Ascending aorta (tissue), 2 donors: ENCODE measurements at regions of chr6 and their contacts with region 1.

Region 1: DNA sequence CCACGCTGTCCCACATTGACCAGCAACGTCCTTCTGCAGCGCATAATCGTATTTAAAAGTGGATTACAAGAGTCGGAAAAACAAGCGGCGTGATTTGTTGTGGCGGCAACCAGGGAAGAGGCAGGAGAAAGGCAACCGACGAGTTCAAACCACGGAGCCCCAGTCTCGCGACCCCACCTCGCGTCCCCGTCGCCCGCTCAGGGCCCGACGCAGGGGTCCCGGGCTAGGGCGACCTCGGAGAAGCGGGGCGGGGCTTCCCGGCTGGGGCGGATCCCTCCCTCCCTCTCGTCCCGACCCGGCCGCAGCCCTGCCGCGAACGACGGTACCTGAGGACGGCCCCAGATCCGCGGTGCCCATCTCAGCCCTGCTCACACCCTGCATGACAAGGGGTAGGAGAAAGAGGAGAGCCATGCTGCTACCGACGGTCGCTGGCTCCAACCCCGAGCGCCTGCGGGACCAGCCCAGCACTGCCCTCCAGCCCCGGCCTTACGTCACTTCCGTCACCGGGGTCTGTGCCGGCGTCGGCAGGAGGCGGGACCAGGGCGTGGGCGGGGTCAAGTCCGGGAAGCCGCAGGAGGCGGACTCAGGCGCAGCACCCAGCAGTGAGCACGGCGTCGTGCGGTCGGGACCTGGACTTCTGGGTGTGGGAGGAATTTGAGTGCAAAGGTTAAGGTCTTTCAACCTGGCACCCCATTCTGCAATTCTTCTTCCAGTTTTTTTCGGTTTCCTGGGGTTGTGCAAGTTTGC is at the start of gene IFNGR1:
- DNase-seq: peak; percentile 82 to 98
- H3K4me3 ChIP-seq: peak within 1 kb of the TSS; percentile 87 to 93
- H3K27ac ChIP-seq: peak within 1 kb of the TSS; percentile 99
- H3K4me1 ChIP-seq: peaks cover 6 to 46% of the 10 kb centered on the region in 2 donors
- H3K27me3 ChIP-seq: no peaks in the 10 kb centered on the region
- CTCF ChIP-seq: peak in 1 of 3 experiments; percentile 2
- total RNA-seq, gene IFNGR1: 47.7 TPM

Region 2: GRCh38 chr6:136822376-136823127 is 396.5 kb before region 1 on chr6 and contains the start of gene PEX7:
- intact Hi-C with region 1: loop called (anchors 2 kb)
- DNase-seq: peak; percentile 47 to 93
- H3K4me3 ChIP-seq: peak within 1 kb of the TSS; percentile 73 to 95
- H3K27ac ChIP-seq: peak within 1 kb of the TSS; percentile 88 to 97
- H3K4me1 ChIP-seq: no peaks in the 10 kb centered on the region
- H3K27me3 ChIP-seq: no peaks in the 10 kb centered on the region
- CTCF ChIP-seq: peak; percentile 42 to 57 (median 56)
- total RNA-seq, gene PEX7: 10.5 TPM